ENCODE measurements at regions of chr10 and their contacts with region 1.

Region 1: GRCh38 chr10:73644015-73644743 is 2.9 kb upstream of the MYOZ1 start:
- DNase-seq: peak; percentile 69
- ATAC-seq: peak; percentile 81
- H3K4me3 ChIP-seq: no peak overlapping the region
- H3K27ac ChIP-seq: peak overlapping the region; percentile 23; the same call in 1 of the 2 replicates
- H3K4me1 ChIP-seq: no peaks in the 10 kb centered on the region
- H3K27me3 ChIP-seq: no peaks in the 10 kb centered on the region
- CTCF ChIP-seq: peak; percentile 90

Region 2: GRCh38 chr10:73263948-73264347 is 380.2 kb before region 1 on chr10:
- CTCF ChIA-PET with region 1: no interaction called
- POLR2A ChIA-PET with region 1: no interaction called
- in situ Hi-C with region 1: no loop called
- intact Hi-C with region 1: loop called (anchors 10 kb)
- DNase-seq: peak; percentile 47
- ATAC-seq: peak; percentile 47; the same call in 1 of the 2 replicates
- H3K4me3 ChIP-seq: no peak overlapping the region
- H3K27ac ChIP-seq: no peak overlapping the region
- H3K4me1 ChIP-seq: no peaks in the 10 kb centered on the region; the same call in 1 of the 2 replicates
- H3K27me3 ChIP-seq: peaks cover 2% of the 10 kb centered on the region; the same call in 1 of the 2 replicates
- CTCF ChIP-seq: peak; percentile 77; the same call in 1 of the 2 replicates

Region 3: DNA sequence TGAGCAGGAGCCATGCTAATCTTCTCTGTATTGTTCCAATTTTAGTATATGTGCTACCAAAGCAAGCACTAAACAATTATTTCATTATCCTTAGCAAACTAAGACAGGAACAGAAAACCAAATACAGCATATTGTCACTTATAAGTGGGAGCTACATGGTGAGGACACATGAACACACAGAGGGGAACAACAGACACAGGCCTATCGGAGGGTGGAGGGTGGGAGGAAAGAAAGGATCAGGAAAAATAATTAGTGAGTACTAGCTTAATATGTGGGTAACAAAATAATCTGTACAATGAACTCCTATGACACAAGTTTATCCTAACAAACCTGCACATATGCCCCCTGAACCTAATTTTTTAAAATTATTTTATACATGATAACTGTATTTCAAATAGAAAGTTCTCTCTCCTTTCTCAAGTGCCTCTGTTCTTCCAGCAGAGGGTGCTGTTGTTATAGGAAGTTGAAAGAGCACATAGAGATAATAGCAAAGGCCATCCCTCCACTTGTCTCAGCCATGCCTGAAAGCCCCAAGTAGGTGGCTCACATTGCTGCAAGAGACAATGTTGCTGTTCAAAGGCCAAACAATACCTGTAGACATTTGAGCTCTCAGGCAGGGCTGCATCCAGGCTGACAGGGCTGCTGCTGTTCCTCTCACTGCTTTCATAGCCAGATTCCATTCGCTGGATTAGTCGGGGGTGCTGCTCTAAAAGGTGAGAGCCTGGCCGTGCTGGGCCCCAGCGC is 114.9 kb before region 1 on chr10:
- CTCF ChIA-PET with region 1: interaction called, 23 read pairs
- POLR2A ChIA-PET with region 1: interaction called, 8 read pairs
- in situ Hi-C with region 1: no loop called
- intact Hi-C with region 1: loop called (anchors 1 kb)
- DNase-seq: peak; percentile 48
- ATAC-seq: peak; percentile 98
- H3K4me3 ChIP-seq: no peak overlapping the region
- H3K27ac ChIP-seq: no peak overlapping the region
- H3K4me1 ChIP-seq: no peaks in the 10 kb centered on the region
- H3K27me3 ChIP-seq: no peaks in the 10 kb centered on the region
- CTCF ChIP-seq: peak; percentile 87

Region 4: DNA sequence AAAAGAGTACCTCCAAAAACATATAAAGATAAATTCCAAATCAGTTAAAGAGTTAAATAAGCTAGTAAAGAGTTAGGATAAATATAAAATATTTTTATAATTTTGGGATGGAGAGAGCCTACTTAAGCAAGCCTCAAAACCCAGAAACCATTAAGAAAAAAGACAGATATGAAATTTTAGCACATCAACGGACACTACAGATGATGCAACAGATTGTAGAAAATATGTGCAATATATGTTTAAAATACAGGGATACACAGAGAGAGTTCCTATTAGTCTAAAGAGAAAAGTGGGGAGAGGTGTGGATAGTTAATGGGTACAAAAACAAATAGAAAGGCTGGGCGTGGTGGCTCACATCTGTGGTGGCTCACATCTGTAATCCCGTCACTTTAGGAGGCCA is 29.5 kb before region 1 on chr10:
- CTCF ChIA-PET with region 1: interaction called, 11 read pairs
- POLR2A ChIA-PET with region 1: no interaction called
- in situ Hi-C with region 1: no loop called
- intact Hi-C with region 1: no loop called
- DNase-seq: no peak
- ATAC-seq: no peak
- H3K4me3 ChIP-seq: no peak overlapping the region
- H3K27ac ChIP-seq: no peak overlapping the region
- H3K4me1 ChIP-seq: no peaks in the 10 kb centered on the region
- H3K27me3 ChIP-seq: no peaks in the 10 kb centered on the region
- CTCF ChIP-seq: no peak

Region 5: DNA sequence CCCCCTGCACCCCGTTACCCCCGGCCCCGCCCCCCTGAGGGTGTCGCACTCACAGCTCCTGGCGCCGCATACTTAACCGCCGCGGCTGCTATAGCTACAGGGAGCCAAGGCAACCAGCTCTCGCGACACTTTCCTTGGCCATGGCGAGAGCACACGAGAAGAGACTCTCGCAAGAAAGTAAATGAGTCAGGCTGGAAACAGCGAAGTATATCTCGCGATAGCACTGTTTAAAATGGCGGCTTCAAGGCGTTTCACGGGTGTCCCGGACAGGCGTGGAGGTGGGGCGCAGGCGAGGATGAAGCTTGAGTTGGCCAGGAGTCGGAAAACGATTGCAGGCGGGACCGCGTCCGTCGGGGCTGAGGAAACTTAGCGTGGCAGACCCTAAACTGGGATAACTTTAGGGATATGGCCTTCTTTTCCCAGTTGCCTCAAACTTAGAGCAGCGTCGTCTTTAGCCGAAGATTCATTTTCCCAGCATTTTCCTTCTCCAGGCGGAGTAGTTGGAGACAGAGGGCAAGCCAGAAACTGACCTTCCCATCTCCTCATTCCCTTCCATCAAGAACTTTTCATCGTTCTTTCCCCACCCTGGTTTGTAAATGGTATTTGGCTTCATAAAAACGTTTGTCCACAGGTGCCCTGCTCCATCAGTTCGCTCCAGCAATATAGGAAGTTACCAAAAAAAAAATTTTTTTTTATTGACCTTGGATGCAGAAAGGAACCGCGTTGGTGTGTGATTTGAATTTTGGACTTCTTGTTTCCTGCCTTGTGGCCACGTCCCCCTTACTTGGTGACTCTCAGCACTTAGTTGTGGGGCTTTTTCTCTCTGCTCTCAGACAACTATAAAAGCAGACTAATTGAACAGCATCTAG is 18.1 kb before region 1 on chr10:
- CTCF ChIA-PET with region 1: interaction called, 11 read pairs
- POLR2A ChIA-PET with region 1: no interaction called
- in situ Hi-C with region 1: no loop called
- intact Hi-C with region 1: no loop called
- DNase-seq: peak; percentile 97
- ATAC-seq: peak; percentile 99
- H3K4me3 ChIP-seq: peak overlapping the region; percentile 66 to 99
- H3K27ac ChIP-seq: peak overlapping the region; percentile 99
- H3K4me1 ChIP-seq: peaks cover 8% of the 10 kb centered on the region
- H3K27me3 ChIP-seq: no peaks in the 10 kb centered on the region
- CTCF ChIP-seq: no peak

Region 6: GRCh38 chr10:73717556-73717955 is 73.4 kb after region 1 on chr10:
- CTCF ChIA-PET with region 1: interaction called, 13 read pairs
- POLR2A ChIA-PET with region 1: no interaction called
- in situ Hi-C with region 1: no loop called
- intact Hi-C with region 1: no loop called
- DNase-seq: no peak
- ATAC-seq: no peak
- H3K4me3 ChIP-seq: no peak overlapping the region
- H3K27ac ChIP-seq: no peak overlapping the region
- H3K4me1 ChIP-seq: no peaks in the 10 kb centered on the region
- H3K27me3 ChIP-seq: no peaks in the 10 kb centered on the region
- CTCF ChIP-seq: no peak

Measured in Panc1 (cell line).